ENCODE measurements at regions of chr6 and their contacts with region 1.

Region 1: GRCh38 chr6:157107915-157108651 is 215.2 kb downstream of the TMEM242 start:
- DNase-seq: peak; percentile 27
- H3K4me3 Mint-ChIP-seq: no peak overlapping the region
- H3K27ac Mint-ChIP-seq: peak overlapping the region; percentile 2
- H3K4me1 Mint-ChIP-seq: peaks cover 38% of the 10 kb centered on the region
- H3K27me3 Mint-ChIP-seq: no peaks in the 10 kb centered on the region

Region 2: GRCh38 chr6:156686995-156687788 is 420.9 kb before region 1 on chr6:
- CTCF ChIA-PET with region 1: no interaction called
- intact Hi-C with region 1: loop called (anchors 5 kb)
- DNase-seq: peak; percentile 63
- H3K4me3 Mint-ChIP-seq: peak overlapping the region; percentile 82
- H3K27ac Mint-ChIP-seq: peak overlapping the region; percentile 91
- H3K4me1 Mint-ChIP-seq: peaks cover 32% of the 10 kb centered on the region
- H3K27me3 Mint-ChIP-seq: no peaks in the 10 kb centered on the region

Region 3: DNA sequence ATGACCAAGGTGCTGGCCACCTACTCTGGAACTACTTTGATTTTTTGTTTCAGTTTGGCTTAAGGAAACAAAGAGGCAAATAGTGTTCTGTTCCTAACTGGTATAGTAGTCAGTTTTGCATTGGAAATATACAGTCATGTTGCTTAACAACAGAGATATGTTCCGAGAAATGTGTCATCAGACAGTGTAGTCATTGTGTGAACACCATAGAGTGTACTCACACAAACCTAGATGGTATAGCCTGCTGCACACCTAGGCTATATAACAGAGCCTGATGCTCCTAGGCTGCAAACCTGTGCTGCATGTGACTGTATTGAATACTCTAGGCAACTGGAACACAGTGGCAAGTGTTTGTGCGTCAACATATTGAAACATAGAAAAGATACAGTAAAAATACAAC is 250.5 kb before region 1 on chr6:
- CTCF ChIA-PET with region 1: no interaction called
- intact Hi-C with region 1: loop called (anchors 2 kb)
- DNase-seq: peak; percentile 57
- H3K4me3 Mint-ChIP-seq: no peak overlapping the region
- H3K27ac Mint-ChIP-seq: peak overlapping the region; percentile 89
- H3K4me1 Mint-ChIP-seq: peaks cover 77% of the 10 kb centered on the region
- H3K27me3 Mint-ChIP-seq: no peaks in the 10 kb centered on the region

Region 4: GRCh38 chr6:157054531-157054979 is 53.5 kb before region 1 on chr6:
- CTCF ChIA-PET with region 1: interaction called, 3 read pairs
- intact Hi-C with region 1: loop called (anchors 1 kb)
- DNase-seq: peak; percentile 67
- H3K4me3 Mint-ChIP-seq: peak overlapping the region; percentile 29
- H3K27ac Mint-ChIP-seq: peak overlapping the region; percentile 94
- H3K4me1 Mint-ChIP-seq: peaks cover 43% of the 10 kb centered on the region
- H3K27me3 Mint-ChIP-seq: no peaks in the 10 kb centered on the region

Region 5: DNA sequence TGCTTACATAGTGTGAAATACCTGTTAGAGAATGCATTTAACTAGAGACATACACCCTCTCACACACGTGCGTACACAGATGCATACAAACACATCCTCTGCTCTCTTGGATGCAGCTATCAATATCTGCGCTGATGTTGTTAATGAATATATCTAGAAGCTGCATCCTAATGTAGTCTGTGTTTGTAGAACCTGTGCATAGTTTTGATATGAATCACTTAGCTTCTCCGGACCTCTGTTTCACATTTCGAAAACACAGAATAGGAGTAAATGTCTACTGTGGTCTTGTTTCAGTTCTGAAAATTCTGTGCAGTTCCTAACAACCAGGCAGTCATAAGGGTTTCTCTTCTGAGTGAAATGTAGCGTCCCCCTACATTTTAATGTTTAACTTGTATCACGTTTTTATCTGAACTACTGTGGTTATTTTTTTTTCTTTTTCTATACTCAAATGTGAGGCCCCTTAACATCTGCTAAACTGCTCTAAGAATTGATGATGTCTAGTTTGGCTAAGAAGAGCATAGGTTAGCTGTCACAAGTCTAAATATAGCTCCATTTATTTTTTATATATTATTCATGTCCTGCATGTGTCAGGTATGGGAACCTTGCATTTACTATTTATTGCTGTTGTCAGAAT is 39.3 kb before region 1 on chr6:
- CTCF ChIA-PET with region 1: interaction called, 4 read pairs
- intact Hi-C with region 1: loop called (anchors 2 kb)
- DNase-seq: no peak
- H3K4me3 Mint-ChIP-seq: no peak overlapping the region
- H3K27ac Mint-ChIP-seq: peak overlapping the region; percentile 22
- H3K4me1 Mint-ChIP-seq: peaks cover 41% of the 10 kb centered on the region
- H3K27me3 Mint-ChIP-seq: no peaks in the 10 kb centered on the region

Region 6: GRCh38 chr6:157075549-157076450 is 32.3 kb before region 1 on chr6:
- CTCF ChIA-PET with region 1: interaction called, 4 read pairs
- intact Hi-C with region 1: loop called (anchors 1 kb)
- DNase-seq: peak; percentile 61
- H3K4me3 Mint-ChIP-seq: peak overlapping the region; percentile 41
- H3K27ac Mint-ChIP-seq: peak overlapping the region; percentile 85
- H3K4me1 Mint-ChIP-seq: peaks cover 53% of the 10 kb centered on the region
- H3K27me3 Mint-ChIP-seq: no peaks in the 10 kb centered on the region

Region 7: DNA sequence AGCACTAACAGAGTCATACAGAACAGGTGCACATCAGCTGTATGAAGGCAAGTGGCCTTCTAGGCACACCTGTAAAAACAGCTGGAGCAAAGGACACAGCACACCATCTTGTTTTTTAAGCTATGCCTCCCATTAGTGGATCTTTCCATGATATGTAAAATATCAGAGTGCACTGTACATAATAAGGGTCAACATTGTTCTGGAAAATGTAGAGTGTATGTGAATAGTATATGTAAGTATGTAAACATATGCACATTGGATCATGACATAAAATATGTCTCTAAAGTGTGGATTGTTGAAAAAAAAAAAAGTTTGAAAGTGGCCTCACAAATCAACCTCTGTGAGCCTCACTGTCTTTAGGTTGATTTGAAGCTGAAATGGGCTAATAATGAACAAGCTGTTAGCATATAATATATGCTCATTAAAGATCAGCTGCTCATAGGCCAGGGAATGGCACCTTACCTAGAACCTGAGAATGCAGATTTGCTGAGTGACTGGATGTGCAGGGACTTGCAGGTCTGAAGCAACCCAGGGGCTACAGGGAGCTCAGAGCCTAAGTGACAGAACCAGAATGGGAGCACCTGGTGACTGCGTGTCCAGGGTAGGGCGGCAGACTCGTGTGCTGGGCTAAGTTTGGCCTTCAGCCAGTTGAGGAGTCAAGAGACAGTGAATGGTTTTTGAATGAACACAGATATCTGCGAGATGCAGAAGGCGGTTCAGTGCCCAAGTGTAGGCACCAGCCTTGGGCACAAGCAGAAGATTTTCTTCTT is 16.6 kb after region 1 on chr6:
- CTCF ChIA-PET with region 1: no interaction called
- intact Hi-C with region 1: no loop called
- DNase-seq: no peak
- H3K4me3 Mint-ChIP-seq: no peak overlapping the region
- H3K27ac Mint-ChIP-seq: no peak overlapping the region
- H3K4me1 Mint-ChIP-seq: peaks cover 9% of the 10 kb centered on the region
- H3K27me3 Mint-ChIP-seq: no peaks in the 10 kb centered on the region

Region 8: DNA sequence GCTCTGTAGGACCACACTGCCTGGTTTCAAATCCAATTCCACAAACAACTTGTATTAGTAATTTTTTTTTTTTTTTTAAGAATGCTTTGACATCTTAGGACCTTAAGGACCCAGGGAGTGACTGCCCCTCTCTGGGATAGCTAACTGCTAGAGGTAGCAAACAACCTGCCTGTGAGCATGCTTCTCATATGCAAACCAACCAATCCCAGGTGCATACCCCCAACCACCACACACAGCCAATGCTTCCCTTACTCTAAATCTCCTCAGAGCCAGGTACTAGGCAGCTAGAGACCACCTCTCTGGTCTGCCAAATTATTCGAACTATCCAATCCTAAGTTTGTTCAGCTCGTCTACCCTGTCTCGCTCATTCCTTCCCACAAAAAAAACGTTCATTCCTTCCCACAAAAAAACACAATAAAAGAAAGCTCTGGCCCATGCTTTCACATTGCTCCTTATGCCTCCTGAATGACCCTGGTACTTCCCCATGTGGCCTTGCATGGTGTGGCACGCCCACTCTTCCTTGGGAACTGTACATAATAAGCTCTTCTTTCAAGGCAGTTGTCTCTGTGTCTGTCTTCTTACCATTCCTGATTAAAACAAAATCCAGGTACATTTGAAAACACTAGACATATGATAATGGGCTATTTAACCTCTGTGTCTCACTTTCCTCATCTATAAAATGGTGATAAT is 1053.6 kb after region 1 on chr6:
- CTCF ChIA-PET with region 1: no interaction called
- intact Hi-C with region 1: no loop called
- DNase-seq: no peak
- H3K4me3 Mint-ChIP-seq: no peak overlapping the region
- H3K27ac Mint-ChIP-seq: no peak overlapping the region
- H3K4me1 Mint-ChIP-seq: peaks cover 18% of the 10 kb centered on the region
- H3K27me3 Mint-ChIP-seq: no peaks in the 10 kb centered on the region